ENCODE measurements at regions of chr3 and their contacts with region 1.

Region 1: DNA sequence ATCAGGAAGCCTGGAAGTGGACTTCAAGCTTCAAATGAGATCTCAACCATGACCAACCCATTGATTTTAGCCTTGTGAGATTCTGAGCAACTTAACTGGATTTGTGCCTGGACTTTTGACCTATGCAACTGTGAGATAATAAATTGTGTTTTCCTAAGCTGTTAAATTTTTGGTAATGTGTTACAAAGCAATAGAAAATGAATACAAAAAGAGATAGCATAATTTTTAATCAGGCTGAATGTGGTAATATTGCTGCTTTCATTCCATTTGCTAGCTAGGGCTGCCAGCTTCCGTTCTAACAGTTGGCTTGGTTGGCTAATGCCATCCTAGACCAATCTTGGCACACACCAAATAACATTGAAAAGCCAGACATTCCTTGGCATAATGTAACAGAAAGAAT is 12.2 kb downstream of the PROS1 start:
- DNase-seq: no peak
- H3K4me3 ChIP-seq: no peak overlapping the region
- H3K27ac ChIP-seq: no peak overlapping the region
- H3K4me1 ChIP-seq: no peaks in the 10 kb centered on the region
- H3K27me3 ChIP-seq: peaks cover 49% of the 10 kb centered on the region
- CTCF ChIP-seq: no peak

Region 2: DNA sequence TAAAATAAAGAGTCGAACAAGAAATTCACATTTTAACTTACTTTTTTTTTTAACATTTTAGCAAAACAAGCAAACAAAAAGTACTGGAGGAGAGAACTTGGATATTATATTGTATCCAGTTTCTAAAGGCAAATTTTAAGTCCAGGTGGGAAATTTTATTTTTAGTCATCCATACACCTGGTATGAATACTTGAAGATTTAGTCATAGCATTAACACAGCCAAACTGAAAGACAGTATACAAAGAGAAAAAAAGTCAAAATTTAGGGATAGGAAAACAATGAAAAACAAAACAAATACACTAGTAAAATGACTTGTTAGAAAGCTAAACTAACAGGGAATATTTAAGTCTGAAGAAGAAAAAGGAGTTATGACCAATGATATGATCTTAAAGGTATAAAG is 56.9 kb before region 1 on chr3:
- CTCF ChIA-PET with region 1: no interaction called
- POLR2A ChIA-PET with region 1: no interaction called
- intact Hi-C with region 1: loop called (anchors 10 kb)
- DNase-seq: no peak
- H3K4me3 ChIP-seq: no peak overlapping the region
- H3K27ac ChIP-seq: no peak overlapping the region
- H3K4me1 ChIP-seq: no peaks in the 10 kb centered on the region
- H3K27me3 ChIP-seq: no peaks in the 10 kb centered on the region
- CTCF ChIP-seq: no peak

Region 3: DNA sequence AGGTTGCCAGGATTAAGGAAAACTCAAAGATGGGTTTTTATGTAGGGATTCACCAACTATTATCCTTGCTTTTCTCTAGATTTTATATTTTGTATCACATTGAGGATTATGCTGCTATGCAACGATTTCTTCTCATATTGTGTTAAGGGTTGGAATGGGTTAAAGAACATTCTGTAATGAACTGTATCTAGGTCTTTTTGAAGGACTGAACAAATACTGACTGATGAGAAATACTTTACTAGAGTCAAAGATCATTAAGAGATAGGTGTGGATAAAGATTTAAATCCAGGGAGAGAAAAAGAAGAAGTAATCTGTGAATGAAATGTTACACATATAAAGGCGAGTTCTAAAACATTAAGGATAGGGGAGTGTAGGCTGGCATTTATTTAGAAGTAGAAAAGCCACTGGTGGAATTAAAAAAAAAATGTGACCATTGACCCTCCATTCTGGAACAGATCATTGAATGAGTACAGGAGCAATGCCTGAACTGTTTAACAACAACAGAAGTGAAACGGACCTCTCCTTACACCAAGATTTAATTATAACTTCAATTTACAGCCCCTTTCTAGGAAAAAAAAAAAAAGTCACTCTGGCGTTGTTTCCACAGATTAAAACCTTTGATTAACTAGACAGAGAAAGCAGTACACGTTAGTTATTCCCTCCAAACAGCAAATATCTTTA is 27.0 kb before region 1 on chr3:
- CTCF ChIA-PET with region 1: no interaction called
- POLR2A ChIA-PET with region 1: no interaction called
- intact Hi-C with region 1: no loop called
- DNase-seq: peak in 1 of 2 experiments; percentile 12
- H3K4me3 ChIP-seq: no peak overlapping the region
- H3K27ac ChIP-seq: no peak overlapping the region
- H3K4me1 ChIP-seq: no peaks in the 10 kb centered on the region
- H3K27me3 ChIP-seq: peaks cover 15% of the 10 kb centered on the region; the same call in 1 of the 2 replicates
- CTCF ChIP-seq: no peak

Measured in PC-9 (cell line).